H1 (cell line): ENCODE measurements at regions of chr1 and their contacts with region 1.

Region 1: GRCh38 chr1:204198151-204198994 is 2.1 kb upstream of the KISS1 start:
- DNase-seq: peak in 1 of 2 experiments; percentile 29
- H3K4me3 ChIP-seq: no peak overlapping the region
- H3K27ac ChIP-seq: no peak overlapping the region
- H3K4me1 ChIP-seq: peaks cover 0 to 5% (median 0%) of the 10 kb centered on the region in 4 experiments; a peak in 3 of 7 replicates
- H3K27me3 ChIP-seq: no peaks in the 10 kb centered on the region
- CTCF ChIP-seq: peak in 1 of 3 experiments; percentile 4; a peak in 2 of 4 replicates
- EP300 ChIP-seq: no peak
- POLR2A ChIP-seq: no peak
- RAD21 ChIP-seq: peak; percentile 16 to 29; a peak in 2 of 4 replicates

Region 2: GRCh38 chr1:204177133-204177532 is 21.2 kb before region 1 on chr1:
- CTCF ChIA-PET with region 1: interaction called, 23 read pairs
- POLR2A ChIA-PET with region 1: no interaction called
- DNase-seq: no peak
- H3K4me3 ChIP-seq: no peak overlapping the region
- H3K27ac ChIP-seq: no peak overlapping the region
- H3K4me1 ChIP-seq: no peaks in the 10 kb centered on the region
- H3K27me3 ChIP-seq: 0 out of 7 replicates have a peak, but pooled peaks cover 0 to 2% (median 0%) of the 10 kb centered on the region in 4 experiments
- CTCF ChIP-seq: no peak
- EP300 ChIP-seq: no peak
- POLR2A ChIP-seq: no peak
- RAD21 ChIP-seq: no peak